Heart left ventricle (tissue), 16 donors: ENCODE measurements at regions of chr9 and their contacts with region 1.

Region 1: GRCh38 chr9:73743826-73744225 is 592.2 kb downstream of the ANXA1 start:
- DNase-seq: no peak
- ATAC-seq: no peak
- H3K4me3 ChIP-seq: no peak overlapping the region
- H3K27ac ChIP-seq: no peak overlapping the region
- H3K4me1 ChIP-seq: no peaks in the 10 kb centered on the region
- H3K27me3 ChIP-seq: no peaks in the 10 kb centered on the region
- CTCF ChIP-seq: no peak
- POLR2A ChIP-seq: no peak

Region 2: DNA sequence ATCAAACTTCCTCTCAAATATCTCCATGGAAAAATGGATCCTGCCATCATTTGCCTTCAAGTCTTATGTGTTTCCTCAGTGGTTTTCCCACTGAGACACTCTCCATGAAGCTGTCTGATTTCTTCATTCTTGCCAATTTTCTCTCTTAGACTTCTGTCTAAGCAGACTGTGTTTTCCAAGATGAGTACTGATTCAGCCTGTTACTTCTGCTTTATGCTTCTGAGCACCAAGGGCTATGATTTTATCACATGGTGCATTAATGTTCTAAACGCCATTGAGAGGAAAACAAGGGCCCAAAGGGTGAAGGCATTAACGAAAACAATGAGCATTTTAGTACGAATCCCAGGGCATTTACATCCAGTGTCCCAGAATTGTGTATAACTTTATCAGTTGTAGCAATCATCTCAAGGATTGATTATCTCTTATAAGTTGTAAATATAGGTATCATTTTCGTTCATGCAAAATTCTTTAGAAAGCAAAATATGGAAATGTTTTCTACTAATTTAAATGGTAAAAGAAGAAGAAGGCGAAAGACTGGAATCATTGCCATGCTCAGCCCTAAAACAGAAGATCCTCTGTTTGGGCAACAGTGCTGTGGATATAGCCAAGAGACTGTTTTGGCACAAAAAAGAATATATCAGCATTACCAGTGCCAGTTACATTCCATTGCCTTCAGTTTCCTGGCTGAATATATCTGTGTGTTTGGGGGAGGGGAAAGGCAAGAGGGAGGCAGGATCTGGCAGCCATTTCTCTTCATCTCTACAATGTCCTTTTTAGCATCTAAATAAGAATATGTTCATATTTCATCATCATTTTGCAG is 54.6 kb before region 1 on chr9:
- intact Hi-C with region 1: loop called in 1 of 10 experiments (anchors 10 kb)
- DNase-seq: no peak
- ATAC-seq: no peak
- H3K4me3 ChIP-seq: no peak overlapping the region
- H3K27ac ChIP-seq: no peak overlapping the region
- H3K4me1 ChIP-seq: no peaks in the 10 kb centered on the region
- H3K27me3 ChIP-seq: no peaks in the 10 kb centered on the region
- CTCF ChIP-seq: no peak
- POLR2A ChIP-seq: no peak

Region 3: GRCh38 chr9:73810585-73811215 is 66.9 kb after region 1 on chr9:
- intact Hi-C with region 1: no loop called
- DNase-seq: no peak
- ATAC-seq: no peak
- H3K4me3 ChIP-seq: no peak overlapping the region
- H3K27ac ChIP-seq: no peak overlapping the region
- H3K4me1 ChIP-seq: no peaks in the 10 kb centered on the region
- H3K27me3 ChIP-seq: no peaks in the 10 kb centered on the region
- CTCF ChIP-seq: no peak
- POLR2A ChIP-seq: no peak